AG04449 (cell line): ENCODE measurements at regions of chr17 and their contacts with region 1.

Region 1: GRCh38 chr17:1186923-1187771 is 7.4 kb upstream of the ABR start:
- DNase-seq: peak; percentile 49
- H3K4me3 ChIP-seq: peak overlapping the region; percentile 25; the same call in 1 of the 2 replicates
- CTCF ChIP-seq: peak; percentile 99

Region 2: GRCh38 chr17:1108861-1109605 is 78.1 kb before region 1 on chr17:
- CTCF ChIA-PET with region 1: interaction called, 49 read pairs
- POLR2A ChIA-PET with region 1: no interaction called
- DNase-seq: no peak
- H3K4me3 ChIP-seq: peak overlapping the region; percentile 72
- CTCF ChIP-seq: no peak

Region 3: DNA sequence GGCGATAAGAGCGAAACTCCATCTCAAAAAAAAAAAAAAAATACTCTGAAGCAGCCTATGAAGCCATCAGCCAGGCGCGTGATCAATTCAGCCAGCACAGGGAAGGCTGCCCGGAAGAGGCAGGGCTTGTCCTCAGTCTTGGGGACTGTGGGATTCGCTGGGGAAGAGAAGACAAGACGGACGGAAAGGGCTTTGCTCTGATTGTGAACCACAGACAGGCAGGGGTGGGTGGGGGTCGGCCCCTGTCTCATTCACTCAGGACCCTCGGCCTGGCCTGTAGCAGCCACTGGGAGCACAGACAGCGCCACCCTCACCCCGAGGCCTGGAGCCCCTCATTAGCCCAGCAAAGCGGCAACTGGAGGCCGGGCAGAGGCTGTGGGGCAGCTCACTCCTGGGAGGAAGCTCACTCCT is 44.6 kb before region 1 on chr17:
- CTCF ChIA-PET with region 1: interaction called, 14 read pairs
- POLR2A ChIA-PET with region 1: no interaction called
- DNase-seq: no peak
- H3K4me3 ChIP-seq: no peak overlapping the region
- CTCF ChIP-seq: no peak

Region 4: GRCh38 chr17:1164935-1165556 is 22.1 kb before region 1 on chr17:
- CTCF ChIA-PET with region 1: interaction called, 16 read pairs
- POLR2A ChIA-PET with region 1: no interaction called
- DNase-seq: no peak
- H3K4me3 ChIP-seq: no peak overlapping the region
- CTCF ChIP-seq: no peak

Region 5: DNA sequence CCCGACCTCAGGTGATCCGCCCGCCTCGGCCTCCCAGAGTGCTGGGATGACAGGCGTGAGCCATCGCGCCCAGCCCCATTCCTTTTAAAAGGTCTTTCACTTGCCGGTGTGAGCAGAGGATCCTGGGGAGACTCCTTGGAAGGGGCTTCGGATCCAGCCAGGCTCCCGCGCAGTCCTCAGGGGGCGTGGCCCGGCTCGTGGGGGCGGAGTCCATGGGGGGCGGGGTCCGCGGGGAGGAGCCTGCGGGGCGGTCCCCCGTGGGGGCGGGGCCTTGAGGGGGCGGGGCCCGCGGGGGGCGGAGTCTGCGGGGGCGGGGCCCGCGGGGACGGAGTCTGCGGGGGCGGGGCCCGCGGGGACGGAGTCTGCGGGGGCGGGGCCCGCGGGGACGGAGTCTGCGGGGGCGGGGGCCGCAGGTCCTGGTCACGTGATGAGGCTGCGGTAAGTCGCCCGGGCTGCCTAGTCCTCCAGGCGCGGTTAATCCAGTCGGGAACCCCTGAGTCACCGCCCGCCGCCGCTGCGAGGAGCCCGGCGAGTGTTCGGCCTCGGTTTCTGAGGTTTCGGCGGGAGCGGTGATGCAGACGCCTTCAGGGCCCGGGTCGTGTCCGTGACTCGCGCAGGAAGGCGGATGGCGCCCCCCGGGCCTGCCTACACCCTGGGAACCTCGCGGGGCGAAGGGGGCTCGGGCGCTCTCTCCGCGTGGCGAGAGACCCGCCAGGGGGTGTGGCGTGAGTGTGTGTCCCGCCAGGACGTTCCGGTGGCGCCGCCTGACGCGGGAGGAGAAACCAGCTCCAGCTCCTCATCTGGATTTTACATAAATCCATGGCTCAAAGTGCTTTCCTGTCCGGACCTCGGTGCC is 16.2 kb after region 1 on chr17:
- CTCF ChIA-PET with region 1: interaction called, 55 read pairs
- POLR2A ChIA-PET with region 1: interaction called, 4 read pairs
- DNase-seq: no peak
- H3K4me3 ChIP-seq: peak overlapping the region; percentile 62
- CTCF ChIP-seq: no peak

Region 6: DNA sequence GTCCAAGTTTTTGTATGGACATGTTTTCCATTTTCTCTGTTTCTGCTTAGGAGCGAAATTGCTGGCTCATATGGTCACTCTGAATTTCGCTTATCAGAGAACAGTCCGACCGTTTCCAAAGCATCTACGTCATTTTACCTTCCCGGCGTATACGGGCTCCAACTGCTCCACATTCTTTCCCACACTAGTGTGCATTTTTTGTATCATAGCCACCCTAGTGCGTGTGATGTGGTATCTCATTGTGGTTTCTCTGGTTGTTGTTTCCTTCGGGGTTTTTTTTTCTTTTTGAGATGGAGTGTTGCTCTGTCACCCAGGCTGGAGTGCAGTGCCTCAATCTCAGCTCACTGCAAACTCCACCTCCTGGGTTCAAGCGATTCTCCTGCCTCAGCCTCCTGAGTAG is 52.1 kb after region 1 on chr17:
- CTCF ChIA-PET with region 1: no interaction called
- POLR2A ChIA-PET with region 1: no interaction called
- DNase-seq: no peak
- H3K4me3 ChIP-seq: no peak overlapping the region
- CTCF ChIP-seq: no peak

Region 7: DNA sequence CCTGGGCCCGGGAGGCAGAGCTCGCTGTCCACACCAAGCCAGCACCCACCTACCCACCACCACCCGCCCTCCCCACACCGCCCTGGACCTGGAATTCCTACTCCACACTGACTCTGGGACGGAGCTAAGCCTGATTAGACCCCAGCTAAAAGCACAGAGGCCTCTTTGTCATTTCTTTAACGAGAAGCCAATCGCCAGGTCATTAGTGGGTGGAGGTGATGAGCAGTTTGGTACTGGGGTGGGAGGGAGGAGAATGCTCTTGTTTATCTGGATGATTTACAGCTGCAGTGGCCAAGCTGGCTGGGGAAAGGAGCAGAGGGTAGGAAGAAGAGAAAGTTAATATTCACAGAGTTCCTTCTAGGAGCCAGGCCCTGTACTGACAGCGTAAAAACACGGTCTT is 77.0 kb after region 1 on chr17:
- CTCF ChIA-PET with region 1: no interaction called
- POLR2A ChIA-PET with region 1: no interaction called
- DNase-seq: no peak
- H3K4me3 ChIP-seq: no peak overlapping the region
- CTCF ChIP-seq: no peak